Activated CD8-positive, alpha-beta T cell treated with anti-CD3 and anti-CD28 coated beads for 36 hours (primary cell): ENCODE measurements at regions of chr3 and their contacts with region 1.

Region 1: GRCh38 chr3:115092220-115092791 is 54.8 kb downstream of the ZBTB20 start:
- DNase-seq: peak; percentile 77
- ATAC-seq: peak; percentile 62
- H3K4me3 Mint-ChIP-seq: no peak overlapping the region
- H3K27ac Mint-ChIP-seq: no peak overlapping the region
- H3K4me1 Mint-ChIP-seq: peaks cover 34% of the 10 kb centered on the region
- H3K27me3 Mint-ChIP-seq: no peaks in the 10 kb centered on the region
- CTCF ChIP-seq: peak; percentile 81

Region 2: GRCh38 chr3:115052906-115053305 is 39.4 kb before region 1 on chr3:
- CTCF ChIA-PET with region 1: interaction called, 10 read pairs
- POLR2A ChIA-PET with region 1: no interaction called
- intact Hi-C with region 1: no loop called
- DNase-seq: no peak
- ATAC-seq: no peak
- H3K4me3 Mint-ChIP-seq: no peak overlapping the region
- H3K27ac Mint-ChIP-seq: no peak overlapping the region
- H3K4me1 Mint-ChIP-seq: peaks cover 4% of the 10 kb centered on the region
- H3K27me3 Mint-ChIP-seq: no peaks in the 10 kb centered on the region
- CTCF ChIP-seq: no peak

Region 3: GRCh38 chr3:115169808-115170207 is 77.5 kb after region 1 on chr3:
- CTCF ChIA-PET with region 1: interaction called, 79 read pairs
- POLR2A ChIA-PET with region 1: no interaction called
- intact Hi-C with region 1: loop called (anchors 1 kb)
- DNase-seq: no peak
- ATAC-seq: no peak
- H3K4me3 Mint-ChIP-seq: no peak overlapping the region
- H3K27ac Mint-ChIP-seq: no peak overlapping the region
- H3K4me1 Mint-ChIP-seq: peaks cover 11% of the 10 kb centered on the region
- H3K27me3 Mint-ChIP-seq: no peaks in the 10 kb centered on the region
- CTCF ChIP-seq: peak; percentile 20

Region 4: GRCh38 chr3:115217678-115218451 is 125.6 kb after region 1 on chr3:
- CTCF ChIA-PET with region 1: interaction called, 11 read pairs
- POLR2A ChIA-PET with region 1: interaction called, 3 read pairs
- intact Hi-C with region 1: no loop called
- DNase-seq: peak; percentile 18
- ATAC-seq: no peak
- H3K4me3 Mint-ChIP-seq: no peak overlapping the region
- H3K27ac Mint-ChIP-seq: no peak overlapping the region
- H3K4me1 Mint-ChIP-seq: no peaks in the 10 kb centered on the region
- H3K27me3 Mint-ChIP-seq: no peaks in the 10 kb centered on the region
- CTCF ChIP-seq: peak; percentile 63

Region 5: GRCh38 chr3:115228266-115228665 is 136.0 kb after region 1 on chr3:
- CTCF ChIA-PET with region 1: no interaction called
- POLR2A ChIA-PET with region 1: no interaction called
- intact Hi-C with region 1: no loop called
- DNase-seq: no peak
- ATAC-seq: no peak
- H3K4me3 Mint-ChIP-seq: no peak overlapping the region
- H3K27ac Mint-ChIP-seq: no peak overlapping the region
- H3K4me1 Mint-ChIP-seq: no peaks in the 10 kb centered on the region
- H3K27me3 Mint-ChIP-seq: no peaks in the 10 kb centered on the region
- CTCF ChIP-seq: no peak